GM12878 (cell line): ENCODE measurements at regions of chr14 and their contacts with region 1.

Region 1: GRCh38 chr14:50860478-50861086 is 11.3 kb upstream of the ABHD12B start:
- DNase-seq: peak; percentile 50
- ATAC-seq: peak; percentile 83
- H3K4me3 ChIP-seq: peak overlapping the region; percentile 77
- H3K27ac ChIP-seq: peak overlapping the region; percentile 60
- H3K4me1 ChIP-seq: peaks cover 9% of the 10 kb centered on the region
- H3K27me3 ChIP-seq: no peaks in the 10 kb centered on the region; a peak in 1 of 4 replicates
- CTCF ChIP-seq: peak; percentile 61 to 79 (median 71)
- EP300 ChIP-seq: no peak
- POLR2A ChIP-seq: no peak
- RAD21 ChIP-seq: peak; percentile 94

Region 2: GRCh38 chr14:50607181-50607580 is 253.4 kb before region 1 on chr14:
- CTCF ChIA-PET with region 1: interaction called, 71 read pairs
- POLR2A ChIA-PET with region 1: no interaction called
- RAD21 ChIA-PET with region 1: interaction called, 62 read pairs
- SMC1A ChIA-PET with region 1: interaction called, 41 read pairs
- in situ Hi-C with region 1: loop called (anchors 25 kb)
- intact Hi-C with region 1: no loop called
- DNase-seq: no peak
- ATAC-seq: peak; percentile 61
- H3K4me3 ChIP-seq: no peak overlapping the region
- H3K27ac ChIP-seq: no peak overlapping the region
- H3K4me1 ChIP-seq: no peaks in the 10 kb centered on the region
- H3K27me3 ChIP-seq: no peaks in the 10 kb centered on the region; a peak in 1 of 4 replicates
- CTCF ChIP-seq: no peak
- EP300 ChIP-seq: no peak
- POLR2A ChIP-seq: no peak
- RAD21 ChIP-seq: no peak

Region 3: DNA sequence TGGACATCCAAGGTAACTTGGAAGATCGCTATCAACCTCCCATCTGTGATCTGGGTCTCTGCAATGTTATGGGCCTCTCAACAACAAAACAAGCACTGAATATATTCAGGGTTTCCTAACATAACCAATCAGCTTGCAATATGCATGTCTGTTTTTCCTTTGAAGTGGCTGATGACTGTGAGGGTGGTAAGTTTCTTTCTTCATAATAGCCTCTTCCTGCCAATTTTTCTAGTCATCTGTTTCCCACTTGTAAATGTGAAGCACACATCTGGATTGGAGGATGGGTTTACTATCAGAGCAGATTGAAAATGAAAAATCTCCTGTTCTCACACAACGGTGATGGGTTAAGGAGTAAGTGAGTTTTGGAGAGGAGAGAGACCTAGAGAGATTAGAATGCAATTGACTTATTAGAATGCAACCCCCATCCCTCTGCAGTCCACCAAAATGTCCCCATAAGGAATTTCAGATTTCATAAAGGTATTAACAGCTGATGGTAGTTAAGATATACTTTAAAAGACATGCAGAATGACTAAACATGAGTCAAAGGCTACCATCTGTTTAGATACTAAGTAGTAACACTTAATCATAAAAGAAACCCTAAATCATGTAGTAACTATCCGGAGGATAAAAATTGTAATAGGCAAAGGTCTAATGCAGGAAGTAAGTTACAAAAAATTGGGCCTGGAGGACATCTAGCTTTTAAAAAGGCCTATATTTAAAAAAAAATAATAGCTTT is 134.0 kb before region 1 on chr14:
- CTCF ChIA-PET with region 1: interaction called, 5 read pairs
- POLR2A ChIA-PET with region 1: no interaction called
- RAD21 ChIA-PET with region 1: interaction called, 13 read pairs
- SMC1A ChIA-PET with region 1: interaction called, 14 read pairs
- in situ Hi-C with region 1: no loop called
- intact Hi-C with region 1: no loop called
- DNase-seq: no peak
- ATAC-seq: no peak
- H3K4me3 ChIP-seq: no peak overlapping the region
- H3K27ac ChIP-seq: no peak overlapping the region
- H3K4me1 ChIP-seq: no peaks in the 10 kb centered on the region
- H3K27me3 ChIP-seq: no peaks in the 10 kb centered on the region
- CTCF ChIP-seq: no peak
- EP300 ChIP-seq: no peak
- POLR2A ChIP-seq: no peak
- RAD21 ChIP-seq: 0 out of 2 replicates have a peak, but pooled peaks have one; percentile 0

Region 4: GRCh38 chr14:50773632-50774541 is 86.7 kb before region 1 on chr14:
- CTCF ChIA-PET with region 1: interaction called, 317 read pairs
- POLR2A ChIA-PET with region 1: interaction called, 9 read pairs
- RAD21 ChIA-PET with region 1: interaction called, 186 read pairs
- SMC1A ChIA-PET with region 1: interaction called, 229 read pairs
- in situ Hi-C with region 1: no loop called
- intact Hi-C with region 1: loop called (anchors 2 kb)
- DNase-seq: no peak
- ATAC-seq: peak; percentile 67; the same call in 2 of the 3 replicates
- H3K4me3 ChIP-seq: no peak overlapping the region
- H3K27ac ChIP-seq: no peak overlapping the region
- H3K4me1 ChIP-seq: no peaks in the 10 kb centered on the region; the same call in 1 of the 2 replicates
- H3K27me3 ChIP-seq: no peaks in the 10 kb centered on the region
- CTCF ChIP-seq: peak; percentile 63 to 78 (median 76)
- EP300 ChIP-seq: no peak
- POLR2A ChIP-seq: no peak
- RAD21 ChIP-seq: peak; percentile 79

Region 5: GRCh38 chr14:50798048-50798421 is 62.5 kb before region 1 on chr14:
- CTCF ChIA-PET with region 1: interaction called, 237 read pairs
- POLR2A ChIA-PET with region 1: interaction called, 9 read pairs
- RAD21 ChIA-PET with region 1: interaction called, 56 read pairs
- SMC1A ChIA-PET with region 1: interaction called, 233 read pairs
- in situ Hi-C with region 1: no loop called
- intact Hi-C with region 1: no loop called
- DNase-seq: peak; percentile 42
- ATAC-seq: peak; percentile 98
- H3K4me3 ChIP-seq: no peak overlapping the region; the same call in 1 of the 2 replicates
- H3K27ac ChIP-seq: peak overlapping the region; percentile 36
- H3K4me1 ChIP-seq: peaks cover 55% of the 10 kb centered on the region
- H3K27me3 ChIP-seq: no peaks in the 10 kb centered on the region
- CTCF ChIP-seq: no peak
- EP300 ChIP-seq: 0 out of 4 replicates have a peak, but pooled peaks have one; percentile 17 to 44
- POLR2A ChIP-seq: 0 out of 2 replicates have a peak, but pooled peaks have one; percentile 28
- RAD21 ChIP-seq: no peak

Region 6: GRCh38 chr14:50846226-50846880 is 14.2 kb before region 1 on chr14:
- CTCF ChIA-PET with region 1: interaction called, 19 read pairs
- POLR2A ChIA-PET with region 1: interaction called, 7 read pairs
- RAD21 ChIA-PET with region 1: interaction called, 8 read pairs
- SMC1A ChIA-PET with region 1: interaction called, 25 read pairs
- in situ Hi-C with region 1: no loop called
- intact Hi-C with region 1: no loop called
- DNase-seq: no peak
- ATAC-seq: no peak
- H3K4me3 ChIP-seq: no peak overlapping the region
- H3K27ac ChIP-seq: no peak overlapping the region
- H3K4me1 ChIP-seq: no peaks in the 10 kb centered on the region
- H3K27me3 ChIP-seq: no peaks in the 10 kb centered on the region; a peak in 1 of 4 replicates
- CTCF ChIP-seq: no peak
- EP300 ChIP-seq: no peak
- POLR2A ChIP-seq: no peak
- RAD21 ChIP-seq: no peak